Right cardiac atrium (tissue), 5 donors: ENCODE measurements at regions of chr3 and their contacts with region 1.

Region 1: DNA sequence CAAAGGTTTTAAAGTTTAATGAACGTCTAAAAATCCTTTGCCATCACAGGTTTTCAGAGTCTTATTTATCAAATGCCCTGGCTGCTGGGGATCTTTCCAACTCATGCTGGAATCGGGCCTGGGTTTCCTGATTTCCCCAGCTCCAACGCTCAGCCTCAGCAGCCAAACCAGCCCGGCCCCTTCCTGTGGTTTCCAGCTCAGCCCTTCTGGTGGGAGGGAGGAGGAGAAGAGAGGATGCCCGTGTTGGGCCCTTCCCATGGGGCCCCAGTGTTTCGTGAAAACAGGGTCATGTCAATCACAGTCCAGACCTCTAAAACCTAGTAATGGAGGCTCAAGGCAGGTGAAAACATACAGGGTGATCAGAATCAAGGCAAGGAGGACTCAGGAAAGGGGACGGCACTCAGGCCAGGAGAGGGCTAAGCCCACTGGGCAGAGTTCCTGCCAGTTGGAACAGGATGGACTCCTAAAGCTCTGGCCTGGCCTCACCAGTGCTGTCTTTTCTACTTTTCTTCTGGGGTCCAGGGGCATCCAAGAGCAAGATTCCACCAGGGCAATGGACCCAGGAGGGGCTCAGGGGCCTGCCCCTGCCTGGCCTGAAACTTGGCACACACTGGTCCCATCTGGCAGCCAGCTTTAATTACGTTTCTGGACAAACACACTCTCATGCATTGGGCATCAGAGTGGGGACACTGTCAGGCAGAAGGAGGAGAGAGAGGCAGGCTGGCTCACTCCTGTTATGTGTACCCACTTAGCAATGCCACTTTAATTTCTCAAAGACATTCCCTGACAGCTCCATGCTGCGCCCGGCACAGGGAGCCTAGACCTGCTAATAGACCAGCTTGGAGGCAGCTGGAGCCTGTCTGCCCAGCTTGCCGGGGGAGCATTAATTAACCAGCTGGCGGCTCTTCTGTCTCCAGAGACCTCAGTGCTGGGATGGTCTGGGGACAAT is 194.6 kb downstream of the FAM43A start:
- DNase-seq: peak; percentile 80 to 93 (median 91)
- ATAC-seq: peak; percentile 90 to 92
- H3K4me3 ChIP-seq: no peak overlapping the region
- H3K27ac ChIP-seq: peak overlapping the region; percentile 68
- H3K4me1 ChIP-seq: peaks cover 15% of the 10 kb centered on the region
- H3K27me3 ChIP-seq: no peaks in the 10 kb centered on the region

Region 2: DNA sequence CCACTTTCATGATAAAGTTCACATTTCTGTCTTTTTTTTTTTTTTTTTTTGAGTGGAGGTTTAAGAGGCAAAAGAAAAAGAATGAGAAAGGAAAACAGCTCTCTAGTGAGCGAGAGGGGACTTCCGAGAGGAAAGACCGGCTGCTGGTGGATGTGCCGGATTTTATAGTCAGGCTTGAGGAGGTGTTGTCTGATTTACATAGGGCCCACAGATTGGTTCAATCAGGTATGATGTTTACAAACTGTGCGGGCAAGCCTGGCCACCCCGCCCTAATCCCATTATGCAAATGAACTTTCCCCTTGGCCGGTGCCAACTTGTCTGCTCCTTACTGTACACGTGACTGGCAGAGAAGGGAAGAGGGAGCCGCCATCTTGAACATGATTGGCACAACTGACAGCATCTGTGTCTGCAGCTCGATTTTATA is 149.9 kb before region 1 on chr3:
- intact Hi-C with region 1: no loop called
- DNase-seq: no peak
- ATAC-seq: no peak
- H3K4me3 ChIP-seq: no peak overlapping the region
- H3K27ac ChIP-seq: no peak overlapping the region
- H3K4me1 ChIP-seq: no peaks in the 10 kb centered on the region
- H3K27me3 ChIP-seq: no peaks in the 10 kb centered on the region

Region 3: GRCh38 chr3:194928831-194929577 is 48.7 kb after region 1 on chr3:
- intact Hi-C with region 1: loop called in 1 of 4 experiments (anchors 5 kb)
- DNase-seq: peak in 2 of 3 donors; percentile 62 to 65
- ATAC-seq: no peak
- H3K4me3 ChIP-seq: no peak overlapping the region
- H3K27ac ChIP-seq: no peak overlapping the region
- H3K4me1 ChIP-seq: peaks cover 12% of the 10 kb centered on the region
- H3K27me3 ChIP-seq: no peaks in the 10 kb centered on the region

Region 4: DNA sequence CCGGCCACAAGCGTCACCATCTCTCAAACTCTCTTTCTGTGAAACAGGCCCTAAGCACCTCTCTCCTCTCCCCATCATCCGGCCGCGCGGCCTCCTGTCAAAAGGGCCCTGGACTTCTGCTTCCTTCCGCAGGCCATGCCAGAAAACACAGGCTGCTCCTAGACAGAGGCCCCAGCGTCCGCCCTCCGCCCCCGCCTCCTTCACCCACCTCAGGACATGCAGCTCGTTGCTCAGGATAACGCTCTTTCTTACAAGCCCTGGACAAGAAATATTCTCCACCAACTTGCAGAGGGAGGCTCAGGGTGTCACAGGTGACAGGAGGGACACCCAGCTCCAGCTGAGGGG is 178.7 kb after region 1 on chr3:
- intact Hi-C with region 1: no loop called
- DNase-seq: peak; percentile 64 to 86 (median 83)
- ATAC-seq: peak; percentile 63 to 89
- H3K4me3 ChIP-seq: no peak overlapping the region
- H3K27ac ChIP-seq: no peak overlapping the region
- H3K4me1 ChIP-seq: no peaks in the 10 kb centered on the region
- H3K27me3 ChIP-seq: no peaks in the 10 kb centered on the region